Mucosa of descending colon (tissue), 3 donors: ENCODE measurements at regions of chr13 and their contacts with region 1.

Region 1: GRCh38 chr13:31431722-31432137 is 232.0 kb downstream of the B3GLCT start:
- DNase-seq: peak in 2 of 3 donors; percentile 35 to 75
- ATAC-seq: peak; percentile 67
- H3K4me3 ChIP-seq: no peak overlapping the region
- H3K4me1 ChIP-seq: no peaks in the 10 kb centered on the region
- CTCF ChIP-seq: peak; percentile 83

Region 2: GRCh38 chr13:31174018-31174417 is 257.7 kb before region 1 on chr13:
- intact Hi-C with region 1: no loop called
- DNase-seq: no peak
- ATAC-seq: no peak
- H3K4me3 ChIP-seq: no peak overlapping the region
- H3K4me1 ChIP-seq: no peaks in the 10 kb centered on the region
- CTCF ChIP-seq: no peak

Region 3: GRCh38 chr13:31742097-31742734 is 310.5 kb after region 1 on chr13:
- intact Hi-C with region 1: loop called (anchors 5 to 10 kb)
- DNase-seq: peak in 2 of 3 donors; percentile 45 to 73
- ATAC-seq: peak; percentile 78
- H3K4me3 ChIP-seq: no peak overlapping the region
- H3K4me1 ChIP-seq: no peaks in the 10 kb centered on the region
- CTCF ChIP-seq: peak; percentile 90